ENCODE measurements at regions of chr1 and their contacts with region 1.

Region 1: GRCh38 chr1:153566440-153567379 is 1.1 kb upstream of the S100A2 start:
- DNase-seq: peak; percentile 100
- H3K4me3 Mint-ChIP-seq: peak overlapping the region; percentile 36
- H3K27ac Mint-ChIP-seq: peak overlapping the region; percentile 96
- H3K4me1 Mint-ChIP-seq: peaks cover 63% of the 10 kb centered on the region
- H3K27me3 Mint-ChIP-seq: no peaks in the 10 kb centered on the region
- CTCF ChIP-seq: no peak

Region 2: DNA sequence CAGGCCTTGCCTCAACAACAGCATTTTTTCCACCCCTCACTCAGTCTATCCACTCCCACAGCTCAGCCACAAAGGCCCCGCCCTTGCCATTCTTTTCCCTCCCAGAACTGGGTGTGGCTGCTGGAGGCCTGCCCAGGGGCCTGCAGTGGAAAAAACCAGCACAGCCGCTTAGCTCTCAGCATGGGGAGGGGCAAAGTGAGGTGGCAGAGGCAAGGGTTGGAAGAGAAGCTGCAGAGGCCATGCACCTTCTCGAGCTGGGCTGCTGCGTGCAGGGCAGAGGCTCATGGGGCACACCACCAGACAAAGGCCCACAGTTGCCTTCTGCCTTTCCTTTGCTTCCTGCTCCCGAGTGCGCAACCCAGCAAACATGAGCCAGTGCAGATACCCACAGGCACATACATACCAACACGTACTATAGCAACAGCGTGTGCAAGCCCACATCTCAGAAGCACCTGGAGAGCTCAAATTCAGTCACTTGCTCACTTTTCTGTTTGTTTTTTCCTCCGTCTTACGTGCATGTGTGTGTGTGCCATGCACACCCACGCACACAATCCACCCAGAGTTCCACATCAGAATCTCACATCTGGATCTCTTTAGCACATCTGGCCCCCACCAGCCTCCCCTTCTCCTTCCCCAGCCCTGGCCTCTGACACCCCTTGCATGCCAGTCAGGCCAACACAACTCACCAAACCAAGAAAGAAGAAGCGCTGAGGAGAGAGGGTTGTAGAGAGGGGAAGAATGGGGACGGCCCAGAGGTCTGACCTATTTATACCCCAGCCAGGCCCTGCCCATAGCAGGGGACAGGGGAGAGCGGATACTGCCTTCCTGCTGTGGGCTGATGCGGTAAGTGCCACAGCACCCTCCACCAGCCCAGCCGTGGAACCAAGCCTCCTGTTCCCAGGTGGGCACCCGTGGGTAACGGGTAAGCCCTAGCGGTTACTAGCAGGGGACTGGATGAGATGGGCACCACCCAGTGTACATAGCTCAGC is 21.3 kb before region 1 on chr1 and contains the start of gene S100A4:
- CTCF ChIA-PET with region 1: interaction called, 15 read pairs
- intact Hi-C with region 1: no loop called
- DNase-seq: peak; percentile 98
- H3K4me3 Mint-ChIP-seq: peak within 1 kb of the TSS; percentile 68
- H3K27ac Mint-ChIP-seq: peak within 1 kb of the TSS; percentile 94
- H3K4me1 Mint-ChIP-seq: peaks cover 87% of the 10 kb centered on the region
- H3K27me3 Mint-ChIP-seq: no peaks in the 10 kb centered on the region
- CTCF ChIP-seq: no peak
- total RNA-seq, gene S100A4: 19.8 and 20.5 TPM in 2 replicates

Region 3: GRCh38 chr1:153608742-153609584 is 42.3 kb after region 1 on chr1:
- CTCF ChIA-PET with region 1: interaction called, 10 read pairs
- intact Hi-C with region 1: no loop called
- DNase-seq: peak; percentile 91
- H3K4me3 Mint-ChIP-seq: peak overlapping the region; percentile 90
- H3K27ac Mint-ChIP-seq: peak overlapping the region; percentile 71
- H3K4me1 Mint-ChIP-seq: peaks cover 53% of the 10 kb centered on the region
- H3K27me3 Mint-ChIP-seq: no peaks in the 10 kb centered on the region
- CTCF ChIP-seq: no peak

Region 4: GRCh38 chr1:153663211-153663610 is 96.5 kb after region 1 on chr1:
- CTCF ChIA-PET with region 1: no interaction called
- intact Hi-C with region 1: no loop called
- DNase-seq: no peak
- H3K4me3 Mint-ChIP-seq: no peak overlapping the region
- H3K27ac Mint-ChIP-seq: no peak overlapping the region
- H3K4me1 Mint-ChIP-seq: peaks cover 8% of the 10 kb centered on the region
- H3K27me3 Mint-ChIP-seq: no peaks in the 10 kb centered on the region
- CTCF ChIP-seq: no peak